SK-N-SH (cell line): ENCODE measurements at regions of chr16 and their contacts with region 1.

Region 1: DNA sequence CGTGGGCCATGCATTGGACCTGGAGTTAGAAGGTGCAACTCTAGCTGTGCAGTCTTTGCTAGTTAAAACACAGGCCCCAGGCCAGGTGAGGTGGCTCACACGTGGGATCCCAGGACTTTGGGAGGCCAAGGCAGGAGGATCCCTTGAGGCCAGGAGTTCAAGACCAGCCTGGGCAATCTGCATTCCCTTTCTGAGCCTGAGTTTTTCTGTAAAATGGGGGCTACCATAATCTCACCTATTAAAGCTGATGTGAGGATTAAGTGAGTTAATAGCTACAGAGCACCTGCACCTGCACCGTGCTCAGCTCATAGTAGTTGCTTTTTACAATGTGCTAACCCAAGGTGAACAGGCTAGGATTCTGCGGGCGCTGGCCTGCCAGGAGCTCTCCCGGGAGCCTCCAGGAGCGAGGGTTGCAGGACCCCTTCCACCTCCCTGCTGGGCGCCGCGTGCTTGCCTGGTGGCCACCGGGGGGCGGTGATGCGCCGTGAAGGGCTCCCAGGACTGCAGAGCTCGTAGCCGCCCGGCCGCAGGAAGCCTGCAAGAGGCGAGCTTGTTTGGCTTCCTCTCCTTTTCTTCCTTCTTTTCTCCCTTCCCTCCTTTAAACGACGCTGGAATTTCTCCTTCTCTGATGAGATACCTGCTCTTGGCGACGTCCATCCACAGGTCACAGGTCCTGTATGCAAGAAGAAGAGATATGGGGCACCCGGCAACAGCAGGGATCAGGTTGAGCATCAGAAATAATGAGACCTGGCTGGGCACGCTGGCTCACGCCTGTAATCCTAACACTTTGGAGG is 51.3 kb downstream of the ZFP90 start:
- DNase-seq: peak; percentile 91
- H3K4me3 ChIP-seq: no peak overlapping the region; a peak in 1 of 4 replicates
- H3K27ac ChIP-seq: no peak overlapping the region
- H3K4me1 ChIP-seq: no peaks in the 10 kb centered on the region
- H3K27me3 ChIP-seq: no peaks in the 10 kb centered on the region
- CTCF ChIP-seq: peak; percentile 25; the same call in 1 of the 2 replicates
- EP300 ChIP-seq: no peak
- RAD21 ChIP-seq: peak; percentile 79

Region 2: DNA sequence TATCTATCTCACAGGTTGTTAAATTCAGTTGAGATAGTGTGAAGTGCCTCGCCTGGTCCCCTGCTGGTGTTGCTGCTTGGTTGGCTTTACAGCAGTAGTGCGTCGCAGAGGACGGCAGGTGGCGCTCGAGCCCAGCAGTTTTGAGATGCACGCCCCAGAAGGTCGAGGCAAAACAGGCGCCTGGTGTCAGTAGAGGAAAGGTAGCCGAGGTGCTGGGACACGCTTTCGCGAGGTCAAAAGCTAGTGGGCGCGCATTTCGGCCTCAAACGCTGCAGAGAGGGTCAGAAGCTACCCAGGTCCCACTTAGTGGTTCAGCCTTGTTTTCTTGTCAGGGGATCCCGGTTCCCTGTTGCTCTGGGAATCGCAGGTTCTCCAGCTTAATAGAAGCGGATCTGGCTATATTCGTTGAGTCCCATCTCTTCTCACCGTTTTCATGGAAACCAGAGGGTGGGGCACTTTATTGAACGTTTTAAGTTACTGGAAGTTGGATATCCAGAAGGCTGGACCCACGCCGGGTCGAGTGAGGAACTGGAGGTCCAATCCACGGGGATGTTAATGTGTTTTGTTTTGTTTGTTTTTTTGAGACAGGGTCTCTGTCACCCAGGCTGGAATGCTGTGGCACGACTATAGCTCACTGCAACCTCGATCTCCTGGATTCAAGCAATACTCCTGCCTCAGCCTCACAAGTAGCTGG is 61.6 kb before region 1 on chr16:
- CTCF ChIA-PET with region 1: interaction called, 51 read pairs
- POLR2A ChIA-PET with region 1: no interaction called
- DNase-seq: peak; percentile 89
- H3K4me3 ChIP-seq: peak overlapping the region; percentile 27 to 78; a peak in 3 of 4 replicates
- H3K27ac ChIP-seq: no peak overlapping the region
- H3K4me1 ChIP-seq: peaks cover 10 to 14% of the 10 kb centered on the region in 2 experiments; a peak in 2 of 4 replicates
- H3K27me3 ChIP-seq: no peaks in the 10 kb centered on the region
- CTCF ChIP-seq: peak; percentile 80
- EP300 ChIP-seq: no peak
- RAD21 ChIP-seq: peak; percentile 94

Region 3: GRCh38 chr16:68617734-68618133 is 27.3 kb after region 1 on chr16:
- CTCF ChIA-PET with region 1: interaction called, 11 read pairs
- POLR2A ChIA-PET with region 1: interaction called, 3 read pairs
- DNase-seq: no peak
- H3K4me3 ChIP-seq: no peak overlapping the region
- H3K27ac ChIP-seq: no peak overlapping the region
- H3K4me1 ChIP-seq: no peaks in the 10 kb centered on the region
- H3K27me3 ChIP-seq: no peaks in the 10 kb centered on the region; the same call in 1 of the 2 replicates
- CTCF ChIP-seq: no peak
- EP300 ChIP-seq: no peak
- RAD21 ChIP-seq: no peak

Region 4: DNA sequence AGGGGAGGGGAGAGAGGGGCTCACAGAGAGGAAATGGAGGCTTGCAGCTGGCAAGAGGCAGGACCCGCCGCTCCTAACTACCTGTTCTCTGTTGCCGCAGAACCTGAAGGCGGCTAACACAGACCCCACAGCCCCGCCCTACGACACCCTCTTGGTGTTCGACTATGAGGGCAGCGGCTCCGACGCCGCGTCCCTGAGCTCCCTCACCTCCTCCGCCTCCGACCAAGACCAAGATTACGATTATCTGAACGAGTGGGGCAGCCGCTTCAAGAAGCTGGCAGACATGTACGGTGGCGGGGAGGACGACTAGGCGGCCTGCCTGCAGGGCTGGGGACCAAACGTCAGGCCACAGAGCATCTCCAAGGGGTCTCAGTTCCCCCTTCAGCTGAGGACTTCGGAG is 107.7 kb after region 1 on chr16:
- CTCF ChIA-PET with region 1: interaction called, 10 read pairs
- POLR2A ChIA-PET with region 1: no interaction called
- DNase-seq: no peak
- H3K4me3 ChIP-seq: no peak overlapping the region
- H3K27ac ChIP-seq: no peak overlapping the region
- H3K4me1 ChIP-seq: no peaks in the 10 kb centered on the region
- H3K27me3 ChIP-seq: no peaks in the 10 kb centered on the region
- CTCF ChIP-seq: no peak
- EP300 ChIP-seq: no peak
- RAD21 ChIP-seq: no peak

Region 5: GRCh38 chr16:68800257-68800875 is 210.0 kb after region 1 on chr16:
- CTCF ChIA-PET with region 1: interaction called, 52 read pairs
- POLR2A ChIA-PET with region 1: no interaction called
- DNase-seq: peak; percentile 71
- H3K4me3 ChIP-seq: no peak overlapping the region
- H3K27ac ChIP-seq: no peak overlapping the region
- H3K4me1 ChIP-seq: no peaks in the 10 kb centered on the region
- H3K27me3 ChIP-seq: no peaks in the 10 kb centered on the region; the same call in 1 of the 2 replicates
- CTCF ChIP-seq: peak; percentile 65
- EP300 ChIP-seq: no peak
- RAD21 ChIP-seq: peak; percentile 86

Region 6: GRCh38 chr16:68843482-68844210 is 253.2 kb after region 1 on chr16 and contains the start of gene TANGO6:
- CTCF ChIA-PET with region 1: interaction called, 42 read pairs
- POLR2A ChIA-PET with region 1: interaction called, 3 read pairs
- DNase-seq: peak; percentile 89
- H3K4me3 ChIP-seq: peak within 1 kb of the TSS; percentile 69 to 82
- H3K27ac ChIP-seq: peak within 1 kb of the TSS; percentile 69 to 88
- H3K4me1 ChIP-seq: peaks cover 0 to 3% of the 10 kb centered on the region in 2 experiments; a peak in 2 of 4 replicates
- H3K27me3 ChIP-seq: no peaks in the 10 kb centered on the region
- CTCF ChIP-seq: peak; percentile 52
- EP300 ChIP-seq: no peak
- RAD21 ChIP-seq: peak; percentile 45
- polyA plus RNA-seq, gene TANGO6: 5.5 and 6.5 TPM in 2 replicates